Esophagus squamous epithelium (tissue), 5 donors: ENCODE measurements at regions of chr2 and their contacts with region 1.

Region 1: DNA sequence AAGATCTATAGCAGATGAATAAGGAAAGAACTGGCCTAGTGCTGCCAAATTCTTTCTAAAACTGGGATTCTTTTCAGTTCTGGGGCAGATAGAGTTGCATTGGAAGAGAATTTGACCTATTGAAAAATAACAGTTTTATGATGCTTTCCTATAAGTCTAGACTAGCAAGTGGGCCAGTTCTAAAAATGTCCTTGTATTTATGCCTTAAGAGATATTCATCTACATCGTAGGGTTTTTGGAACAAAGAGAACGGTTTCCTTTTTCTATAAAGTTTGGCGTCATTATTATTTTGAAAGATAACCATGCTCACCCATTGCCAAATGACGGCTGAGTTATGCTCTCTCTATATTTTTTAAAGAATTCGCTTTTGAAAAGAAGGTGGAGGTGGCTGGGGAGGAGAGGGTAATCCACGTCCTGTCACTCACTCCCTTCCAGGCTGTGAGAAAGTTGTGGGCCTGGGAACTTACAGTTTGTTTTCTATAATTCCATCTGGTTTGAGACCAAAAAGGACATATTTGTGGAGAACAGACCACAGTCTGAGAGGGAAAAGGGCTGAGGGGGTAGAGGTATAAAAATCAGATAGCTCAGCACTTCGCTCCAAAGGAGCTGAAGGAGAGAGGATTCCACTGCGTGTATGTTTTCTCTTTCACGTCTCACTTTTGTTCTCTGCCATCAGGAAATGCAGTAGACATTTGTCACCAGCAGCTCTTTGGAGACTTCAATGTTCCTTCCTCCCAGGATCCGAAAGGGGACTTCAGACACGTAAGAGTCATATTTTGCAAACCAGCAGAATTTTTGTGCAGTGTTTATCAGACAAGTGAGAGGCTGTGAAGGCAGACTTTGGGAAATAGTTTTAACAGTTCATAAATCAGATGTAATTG is 281.9 kb upstream of the FN1 start:
- DNase-seq: no peak
- H3K4me3 ChIP-seq: no peak overlapping the region
- H3K27ac ChIP-seq: peak overlapping the region in 3 of 4 donors; percentile 39 to 71 (median 48)
- H3K4me1 ChIP-seq: peaks cover 4 to 29% (median 9%) of the 10 kb centered on the region in 3 donors
- H3K27me3 ChIP-seq: no peaks in the 10 kb centered on the region
- CTCF ChIP-seq: no peak
- POLR2A ChIP-seq: no peak

Region 2: GRCh38 chr2:214127571-214127970 is 1590.2 kb before region 1 on chr2:
- intact Hi-C with region 1: no loop called
- DNase-seq: no peak
- H3K4me3 ChIP-seq: no peak overlapping the region
- H3K27ac ChIP-seq: no peak overlapping the region
- H3K4me1 ChIP-seq: no peaks in the 10 kb centered on the region
- H3K27me3 ChIP-seq: no peaks in the 10 kb centered on the region
- CTCF ChIP-seq: no peak
- POLR2A ChIP-seq: no peak

Region 3: GRCh38 chr2:215579809-215580208 is 137.9 kb before region 1 on chr2:
- intact Hi-C with region 1: no loop called
- DNase-seq: no peak
- H3K4me3 ChIP-seq: no peak overlapping the region
- H3K27ac ChIP-seq: peak overlapping the region in 1 of 4 donors; percentile 7
- H3K4me1 ChIP-seq: no peaks in the 10 kb centered on the region
- H3K27me3 ChIP-seq: no peaks in the 10 kb centered on the region
- CTCF ChIP-seq: no peak
- POLR2A ChIP-seq: no peak

Region 4: GRCh38 chr2:215644233-215644897 is 73.4 kb before region 1 on chr2:
- intact Hi-C with region 1: loop called (anchors 5 kb)
- DNase-seq: no peak
- H3K4me3 ChIP-seq: no peak overlapping the region
- H3K27ac ChIP-seq: no peak overlapping the region
- H3K4me1 ChIP-seq: no peaks in the 10 kb centered on the region
- H3K27me3 ChIP-seq: no peaks in the 10 kb centered on the region
- CTCF ChIP-seq: no peak
- POLR2A ChIP-seq: no peak

Region 5: DNA sequence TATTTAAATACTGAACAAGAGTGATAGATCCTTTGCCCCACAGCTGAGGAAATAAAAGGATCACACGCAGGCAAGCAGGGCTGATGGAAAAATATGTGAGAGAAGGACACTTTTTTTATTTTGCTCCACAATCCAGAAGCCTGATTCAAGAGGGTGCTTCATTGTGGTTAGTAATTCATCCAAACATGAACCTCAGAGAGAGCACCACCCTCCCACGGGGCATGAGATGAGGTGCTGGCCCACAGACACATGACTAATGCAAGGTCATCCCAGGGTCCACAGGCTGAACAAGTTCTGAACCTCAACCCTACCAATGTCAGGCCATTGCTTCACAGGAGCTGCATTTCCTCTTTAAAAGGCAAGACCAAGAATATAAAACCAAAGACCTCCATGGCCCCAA is 56.0 kb after region 1 on chr2:
- intact Hi-C with region 1: no loop called
- DNase-seq: no peak
- H3K4me3 ChIP-seq: no peak overlapping the region
- H3K27ac ChIP-seq: peak overlapping the region in 3 of 4 donors; percentile 32 to 61 (median 46)
- H3K4me1 ChIP-seq: peaks cover 0 to 10% (median 0%) of the 10 kb centered on the region in 3 donors
- H3K27me3 ChIP-seq: no peaks in the 10 kb centered on the region
- CTCF ChIP-seq: no peak
- POLR2A ChIP-seq: no peak

Region 6: DNA sequence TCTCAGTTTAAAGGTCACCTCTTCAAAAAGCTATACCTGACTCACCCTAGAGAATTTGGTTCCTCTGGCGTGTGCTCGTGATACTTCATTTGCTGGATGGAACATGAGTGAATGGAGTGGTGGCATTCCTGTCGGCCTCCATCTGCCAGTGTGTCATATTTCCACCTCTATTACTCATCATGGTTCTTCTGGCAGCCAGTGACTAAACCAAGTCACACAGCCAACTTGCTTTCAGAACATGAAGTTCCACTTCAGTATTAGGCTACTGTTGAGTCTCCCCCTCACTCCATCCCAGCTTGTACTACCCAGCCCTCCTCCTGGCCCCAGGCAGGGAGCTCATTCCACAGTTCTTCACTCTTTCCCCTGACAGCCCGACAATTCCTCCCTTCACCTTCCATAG is 125.8 kb after region 1 on chr2:
- intact Hi-C with region 1: no loop called
- DNase-seq: no peak
- H3K4me3 ChIP-seq: no peak overlapping the region
- H3K27ac ChIP-seq: peak overlapping the region in 1 of 4 donors; percentile 29
- H3K4me1 ChIP-seq: no peaks in the 10 kb centered on the region
- H3K27me3 ChIP-seq: no peaks in the 10 kb centered on the region
- CTCF ChIP-seq: no peak
- POLR2A ChIP-seq: no peak